Right ventricle myocardium inferior (tissue), 1 donor: ENCODE measurements at regions of chr19 and their contacts with region 1.

Region 1: GRCh38 chr19:9075064-9075949 is 11.6 kb upstream of the OR1M1 start:
- DNase-seq: peak; percentile 71
- ATAC-seq: peak; percentile 86

Region 2: GRCh38 chr19:8654591-8655339 is 420.5 kb before region 1 on chr19:
- intact Hi-C with region 1: loop called (anchors 2 kb)
- DNase-seq: peak; percentile 89
- ATAC-seq: peak; percentile 59

Region 3: DNA sequence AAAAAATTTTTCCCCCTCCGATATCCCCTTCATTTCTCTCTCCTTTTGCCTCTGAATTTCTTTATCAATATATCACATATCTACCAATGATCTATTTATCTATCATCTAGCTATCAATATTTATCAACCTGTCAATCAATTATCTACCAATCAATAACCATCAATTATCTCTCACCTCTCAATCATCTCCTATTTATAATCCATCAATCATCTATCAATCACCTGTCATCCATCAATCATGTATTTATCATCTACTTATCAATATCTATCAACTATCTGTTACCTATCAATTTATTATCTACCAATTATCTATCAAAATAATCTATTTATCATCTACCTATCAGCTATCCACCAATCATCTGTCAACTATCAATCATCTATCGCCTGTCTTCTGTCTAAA is 226.1 kb before region 1 on chr19:
- intact Hi-C with region 1: no loop called
- DNase-seq: no peak
- ATAC-seq: no peak

Region 4: GRCh38 chr19:9018163-9018875 is 57.0 kb before region 1 on chr19:
- intact Hi-C with region 1: no loop called
- DNase-seq: no peak
- ATAC-seq: no peak

Region 5: GRCh38 chr19:9058905-9059631 is 16.2 kb before region 1 on chr19:
- intact Hi-C with region 1: no loop called
- DNase-seq: no peak
- ATAC-seq: no peak